ENCODE measurements at regions of chr9 and their contacts with region 1.

Region 1: GRCh38 chr9:899440-900184 is 58.1 kb downstream of the DMRT1 start:
- DNase-seq: peak; percentile 36
- ATAC-seq: peak; percentile 74
- H3K4me3 ChIP-seq: no peak overlapping the region
- H3K27ac ChIP-seq: no peak overlapping the region
- H3K4me1 ChIP-seq: peaks cover 13% of the 10 kb centered on the region
- H3K27me3 ChIP-seq: no peaks in the 10 kb centered on the region
- CTCF ChIP-seq: no peak
- EP300 ChIP-seq: peak; percentile 50 to 84
- POLR2A ChIP-seq: no peak
- RAD21 ChIP-seq: no peak

Region 2: DNA sequence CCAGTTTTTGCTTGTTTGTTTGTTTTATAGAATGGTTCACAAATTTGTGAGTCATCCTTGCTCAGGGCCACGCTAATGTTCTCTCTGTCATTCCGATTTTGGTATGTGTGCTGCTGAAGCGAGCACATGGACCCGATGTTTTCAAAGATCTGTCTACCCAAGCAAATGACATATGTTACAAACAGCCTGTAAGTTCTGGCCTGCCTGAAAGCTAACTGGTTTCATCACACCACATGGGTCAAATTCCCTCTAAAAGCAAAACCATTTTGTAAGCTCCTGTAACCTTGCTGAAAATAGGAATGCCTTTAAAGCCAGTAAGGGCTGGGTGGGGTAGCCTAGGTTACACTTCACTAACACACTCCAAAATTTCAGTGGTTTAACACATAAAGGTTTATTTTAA is 102.2 kb after region 1 on chr9:
- CTCF ChIA-PET with region 1: interaction called, 153 read pairs
- POLR2A ChIA-PET with region 1: interaction called, 4 read pairs
- RAD21 ChIA-PET with region 1: interaction called, 43 read pairs
- SMC1A ChIA-PET with region 1: interaction called, 92 read pairs
- in situ Hi-C with region 1: loop called (anchors 5 kb)
- intact Hi-C with region 1: loop called (anchors 1 kb)
- DNase-seq: no peak
- ATAC-seq: no peak
- H3K4me3 ChIP-seq: no peak overlapping the region
- H3K27ac ChIP-seq: no peak overlapping the region
- H3K4me1 ChIP-seq: peaks cover 3% of the 10 kb centered on the region; the same call in 1 of the 2 replicates
- H3K27me3 ChIP-seq: no peaks in the 10 kb centered on the region
- CTCF ChIP-seq: no peak
- EP300 ChIP-seq: no peak
- POLR2A ChIP-seq: no peak
- RAD21 ChIP-seq: no peak